ENCODE measurements at regions of chr1 and their contacts with region 1.

Region 1: GRCh38 chr1:2240270-2241156 is 12.4 kb downstream of the SKI start:
- DNase-seq: no peak
- H3K4me3 ChIP-seq: no peak overlapping the region
- H3K27ac ChIP-seq: no peak overlapping the region
- H3K4me1 ChIP-seq: peaks cover 23% of the 10 kb centered on the region
- H3K27me3 ChIP-seq: no peaks in the 10 kb centered on the region
- CTCF ChIP-seq: no peak

Region 2: DNA sequence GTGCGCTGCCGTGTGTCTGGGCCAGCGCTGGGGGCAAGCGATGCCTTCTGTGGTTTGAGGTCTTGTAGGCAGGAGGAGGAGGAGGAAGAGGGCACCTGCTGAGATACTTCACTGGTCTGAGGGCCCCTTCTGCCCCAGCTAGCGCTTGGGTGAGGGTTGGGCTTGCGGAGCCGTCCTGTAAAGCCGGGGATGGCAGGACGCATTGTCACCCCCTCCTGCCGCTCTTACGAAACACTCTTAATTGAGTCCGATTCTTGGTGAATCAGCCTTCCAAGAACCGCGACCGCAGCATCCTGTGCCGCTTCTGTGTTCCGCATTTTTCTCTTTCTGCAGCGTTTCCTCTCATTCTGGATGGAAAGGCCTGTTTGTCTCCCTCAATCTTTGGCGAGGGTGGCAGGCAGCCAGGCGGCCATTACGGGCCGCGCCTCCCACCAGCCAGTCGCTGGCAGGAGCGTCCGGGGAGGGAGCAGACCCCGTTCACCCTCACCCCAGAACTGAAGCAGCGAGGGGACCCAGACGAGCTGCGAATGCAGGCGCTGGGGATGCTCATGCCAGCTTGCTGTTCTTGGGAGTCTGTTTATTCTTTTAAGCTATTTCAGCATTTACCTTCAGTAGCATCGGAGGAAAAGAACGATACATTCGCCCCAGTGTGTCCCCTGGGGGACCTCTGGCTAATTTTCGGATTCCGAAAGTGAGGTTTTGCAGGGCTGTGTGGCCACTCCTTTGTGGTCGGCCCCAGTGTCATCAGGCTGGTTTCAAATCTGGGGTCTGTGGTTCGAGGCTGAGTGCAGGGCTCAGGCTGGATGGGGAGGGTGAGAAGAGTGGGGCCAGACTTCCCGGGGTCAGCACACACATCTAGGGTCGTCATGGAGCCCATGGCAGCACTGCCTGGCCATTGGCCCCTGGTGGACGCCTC is 50.3 kb after region 1 on chr1:
- intact Hi-C with region 1: no loop called
- DNase-seq: peak; percentile 71
- H3K4me3 ChIP-seq: no peak overlapping the region
- H3K27ac ChIP-seq: peak overlapping the region; percentile 68
- H3K4me1 ChIP-seq: peaks cover 3% of the 10 kb centered on the region
- H3K27me3 ChIP-seq: no peaks in the 10 kb centered on the region
- CTCF ChIP-seq: no peak

Region 3: DNA sequence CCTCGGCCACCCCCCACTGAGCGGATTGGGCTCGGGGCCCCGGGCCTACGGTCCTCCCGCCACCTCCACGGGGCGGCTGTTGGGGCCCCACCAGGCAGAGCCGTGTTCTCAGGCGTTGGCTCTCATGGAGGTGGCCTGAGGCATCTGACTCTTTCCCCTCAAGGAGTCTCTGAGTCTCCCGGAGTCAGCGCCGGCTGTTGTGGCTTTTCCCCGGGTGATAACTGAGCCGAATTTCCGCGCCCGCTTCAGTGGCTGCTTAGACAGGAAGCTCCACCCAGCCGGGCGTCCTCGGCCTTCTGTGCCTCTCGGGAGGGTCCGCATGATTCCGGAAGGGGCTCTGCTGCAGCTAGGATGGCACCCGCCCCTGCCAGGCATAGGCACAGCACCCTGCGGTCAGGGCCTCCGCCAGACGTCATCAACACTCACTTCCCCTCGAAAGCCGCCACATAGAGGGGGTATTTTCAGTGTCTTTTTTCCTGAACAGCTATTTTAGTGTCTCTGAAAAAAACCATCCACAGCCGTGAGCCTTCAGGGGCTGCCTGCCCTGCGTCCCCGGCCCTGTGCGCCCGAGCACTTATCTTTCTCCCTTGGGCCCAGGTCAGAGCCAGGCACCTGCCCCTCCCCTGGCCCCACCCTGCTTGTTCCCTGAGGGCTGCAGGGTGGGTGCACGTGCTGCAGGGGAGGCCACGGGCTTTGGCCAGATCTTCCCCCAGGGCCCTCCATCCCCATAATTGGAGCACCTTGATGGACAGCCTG is 60.5 kb after region 1 on chr1:
- intact Hi-C with region 1: loop called (anchors 5 kb)
- DNase-seq: peak; percentile 71
- H3K4me3 ChIP-seq: peak overlapping the region; percentile 25
- H3K27ac ChIP-seq: peak overlapping the region; percentile 72
- H3K4me1 ChIP-seq: peaks cover 14% of the 10 kb centered on the region
- H3K27me3 ChIP-seq: no peaks in the 10 kb centered on the region
- CTCF ChIP-seq: no peak

Region 4: GRCh38 chr1:2322065-2322571 is 81.6 kb after region 1 on chr1:
- intact Hi-C with region 1: no loop called
- DNase-seq: no peak
- H3K4me3 ChIP-seq: no peak overlapping the region
- H3K27ac ChIP-seq: no peak overlapping the region
- H3K4me1 ChIP-seq: no peaks in the 10 kb centered on the region
- H3K27me3 ChIP-seq: peaks cover 12% of the 10 kb centered on the region
- CTCF ChIP-seq: no peak

Region 5: GRCh38 chr1:2596530-2597333 is 356.2 kb after region 1 on chr1:
- intact Hi-C with region 1: no loop called
- DNase-seq: no peak
- H3K4me3 ChIP-seq: no peak overlapping the region
- H3K27ac ChIP-seq: no peak overlapping the region
- H3K4me1 ChIP-seq: no peaks in the 10 kb centered on the region
- H3K27me3 ChIP-seq: no peaks in the 10 kb centered on the region
- CTCF ChIP-seq: no peak

Measured in colonic mucosa (tissue), 4 donors.